MCF 10A (cell line): ENCODE measurements at regions of chr13 and their contacts with region 1.

Region 1: GRCh38 chr13:75219479-75220237 is 262.3 kb downstream of the TBC1D4 start:
- DNase-seq: peak; percentile 74
- H3K4me3 Mint-ChIP-seq: peak overlapping the region; percentile 54
- H3K27ac Mint-ChIP-seq: no peak overlapping the region
- H3K4me1 Mint-ChIP-seq: peaks cover 29% of the 10 kb centered on the region
- H3K27me3 Mint-ChIP-seq: no peaks in the 10 kb centered on the region
- CTCF ChIP-seq: peak; percentile 97

Region 2: DNA sequence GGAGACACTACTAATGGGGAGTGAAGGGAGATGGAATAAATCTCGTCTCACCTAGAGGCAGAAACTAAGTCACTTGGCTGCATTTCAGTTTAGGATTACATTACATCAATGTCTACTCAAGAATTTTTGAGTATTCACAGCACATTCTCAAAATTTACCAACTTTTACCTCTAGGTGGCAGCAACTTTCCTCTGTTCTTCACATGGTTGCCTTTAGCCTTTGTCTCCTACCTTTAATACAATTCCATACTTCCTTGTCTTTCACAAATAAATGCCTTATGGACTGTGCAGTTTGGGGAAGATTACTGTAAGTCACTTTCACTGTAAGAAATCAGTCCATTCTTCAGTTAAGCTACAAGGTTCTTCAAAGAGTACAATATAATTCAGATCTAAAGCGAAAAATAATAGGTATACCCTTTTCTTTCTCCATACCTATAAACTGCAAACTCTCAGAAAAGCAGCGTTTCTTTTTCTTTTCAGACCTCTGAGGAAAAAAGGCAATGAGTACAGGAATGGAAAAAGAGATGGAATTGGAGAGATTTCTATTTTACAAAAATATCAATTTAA is 1464.8 kb before region 1 on chr13:
- CTCF ChIA-PET with region 1: interaction called, 15 read pairs
- POLR2A ChIA-PET with region 1: no interaction called
- intact Hi-C with region 1: loop called (anchors 2 kb)
- DNase-seq: peak; percentile 71
- H3K4me3 Mint-ChIP-seq: no peak overlapping the region
- H3K27ac Mint-ChIP-seq: no peak overlapping the region
- H3K4me1 Mint-ChIP-seq: peaks cover 5% of the 10 kb centered on the region
- H3K27me3 Mint-ChIP-seq: no peaks in the 10 kb centered on the region
- CTCF ChIP-seq: peak; percentile 61

Region 3: GRCh38 chr13:74133657-74134201 is 1085.9 kb before region 1 on chr13:
- CTCF ChIA-PET with region 1: interaction called, 5 read pairs
- POLR2A ChIA-PET with region 1: interaction called, 4 read pairs
- intact Hi-C with region 1: loop called (anchors 2 kb)
- DNase-seq: peak; percentile 73
- H3K4me3 Mint-ChIP-seq: no peak overlapping the region
- H3K27ac Mint-ChIP-seq: peak overlapping the region; percentile 91
- H3K4me1 Mint-ChIP-seq: peaks cover 18% of the 10 kb centered on the region
- H3K27me3 Mint-ChIP-seq: no peaks in the 10 kb centered on the region
- CTCF ChIP-seq: no peak

Region 4: GRCh38 chr13:74770361-74770760 is 449.3 kb before region 1 on chr13:
- CTCF ChIA-PET with region 1: interaction called, 5 read pairs
- POLR2A ChIA-PET with region 1: no interaction called
- intact Hi-C with region 1: loop called (anchors 1 kb)
- DNase-seq: peak; percentile 22
- H3K4me3 Mint-ChIP-seq: no peak overlapping the region
- H3K27ac Mint-ChIP-seq: peak overlapping the region; percentile 57
- H3K4me1 Mint-ChIP-seq: peaks cover 38% of the 10 kb centered on the region
- H3K27me3 Mint-ChIP-seq: no peaks in the 10 kb centered on the region
- CTCF ChIP-seq: no peak

Region 5: GRCh38 chr13:75258159-75258782 is 38.6 kb after region 1 on chr13:
- CTCF ChIA-PET with region 1: interaction called, 10 read pairs
- POLR2A ChIA-PET with region 1: interaction called, 27 read pairs
- intact Hi-C with region 1: loop called (anchors 5 kb)
- DNase-seq: peak; percentile 70
- H3K4me3 Mint-ChIP-seq: no peak overlapping the region
- H3K27ac Mint-ChIP-seq: no peak overlapping the region
- H3K4me1 Mint-ChIP-seq: peaks cover 10% of the 10 kb centered on the region
- H3K27me3 Mint-ChIP-seq: no peaks in the 10 kb centered on the region
- CTCF ChIP-seq: peak; percentile 67

Region 6: DNA sequence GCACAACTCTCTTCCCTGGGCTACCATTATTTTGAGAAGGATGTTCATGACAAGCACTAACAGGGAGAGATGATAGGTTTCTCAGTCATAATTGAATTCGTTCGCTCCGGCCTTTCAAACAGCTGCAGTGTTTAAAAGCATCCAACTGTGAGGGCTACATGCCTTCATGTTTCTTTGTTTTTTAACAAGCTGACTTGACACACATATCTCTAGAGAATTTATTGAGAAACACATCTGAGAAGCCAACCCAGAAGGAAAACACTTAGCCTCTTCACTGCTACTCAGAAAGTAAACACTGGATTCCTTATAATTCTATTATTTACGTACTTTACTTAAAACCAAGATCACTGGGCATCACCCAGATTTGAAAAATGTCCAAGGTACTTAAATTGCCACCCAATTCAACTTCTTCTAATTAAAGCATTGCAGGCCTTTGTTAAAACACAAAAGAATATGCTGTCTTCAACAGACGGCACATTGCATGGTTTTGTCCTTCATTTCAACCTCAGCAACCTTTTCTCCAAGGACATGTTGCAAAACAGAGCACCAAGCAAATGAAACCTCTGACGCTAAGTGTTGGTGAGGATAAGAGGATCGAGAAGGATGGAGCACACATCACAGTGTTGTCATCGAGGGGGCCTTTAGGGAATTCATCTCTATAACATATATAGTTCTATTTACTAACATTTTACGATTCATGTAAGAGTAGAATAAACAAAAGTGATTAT is 186.5 kb after region 1 on chr13:
- CTCF ChIA-PET with region 1: no interaction called
- POLR2A ChIA-PET with region 1: no interaction called
- intact Hi-C with region 1: no loop called
- DNase-seq: no peak
- H3K4me3 Mint-ChIP-seq: no peak overlapping the region
- H3K27ac Mint-ChIP-seq: no peak overlapping the region
- H3K4me1 Mint-ChIP-seq: no peaks in the 10 kb centered on the region
- H3K27me3 Mint-ChIP-seq: no peaks in the 10 kb centered on the region
- CTCF ChIP-seq: no peak